ENCODE measurements at regions of chr2 and their contacts with region 1.

Region 1: DNA sequence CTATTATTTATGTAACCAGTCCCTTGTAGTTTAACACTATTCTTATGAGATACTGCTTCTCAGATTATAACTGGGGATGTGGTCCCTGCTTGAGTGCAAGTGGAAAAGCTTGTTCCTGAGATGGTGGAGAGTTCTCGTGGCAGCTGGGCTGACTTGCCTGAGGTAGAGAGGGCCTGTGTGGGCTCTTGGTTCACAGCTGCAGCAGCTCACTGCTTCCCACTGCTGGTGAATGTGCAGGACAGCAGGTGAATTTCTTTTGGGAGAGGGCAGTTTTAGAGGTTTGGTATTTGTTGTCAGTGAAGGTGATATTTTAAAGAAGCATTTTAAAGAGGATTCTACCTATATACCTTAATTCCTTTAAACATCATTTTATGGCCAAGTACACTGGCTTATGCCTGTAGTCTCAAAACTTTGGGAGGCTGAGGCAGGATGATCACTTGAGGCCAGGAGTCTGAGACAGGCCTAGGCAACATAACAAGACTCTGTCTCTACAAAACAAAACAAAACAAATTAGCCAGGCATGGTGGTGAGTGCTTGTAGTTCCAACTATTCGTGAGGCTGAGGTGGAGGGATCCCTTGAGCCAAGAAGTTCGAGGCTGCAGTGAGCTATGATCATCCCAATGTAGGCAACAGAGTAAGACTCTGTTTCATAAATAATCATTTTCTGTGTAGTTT is 94.8 kb downstream of the MTA3 start:
- DNase-seq: peak; percentile 26 to 85 (median 75)
- ATAC-seq: peak; percentile 96
- H3K4me3 ChIP-seq: no peak overlapping the region
- H3K4me3 Mint-ChIP-seq: peak overlapping the region in 7 of 10 donors; percentile 31 to 69 (median 53)
- H3K27ac ChIP-seq: peak overlapping the region; percentile 43
- H3K27ac Mint-ChIP-seq: peak overlapping the region in 8 of 9 donors; percentile 29 to 95 (median 83)
- H3K4me1 ChIP-seq: peaks cover 0 to 5% of the 10 kb centered on the region in 2 donors
- H3K4me1 Mint-ChIP-seq: peaks cover 8 to 60% (median 25%) of the 10 kb centered on the region in 7 donors
- H3K27me3 ChIP-seq: no peaks in the 10 kb centered on the region
- H3K27me3 Mint-ChIP-seq: no peaks in the 10 kb centered on the region

Region 2: GRCh38 chr2:41832218-41832617 is 831.0 kb before region 1 on chr2:
- CTCF ChIA-PET with region 1: no interaction called
- POLR2A ChIA-PET with region 1: no interaction called
- intact Hi-C with region 1: no loop called
- DNase-seq: no peak
- ATAC-seq: no peak
- H3K4me3 ChIP-seq: no peak overlapping the region
- H3K4me3 Mint-ChIP-seq: no peak overlapping the region
- H3K27ac ChIP-seq: no peak overlapping the region
- H3K27ac Mint-ChIP-seq: no peak overlapping the region
- H3K4me1 ChIP-seq: no peaks in the 10 kb centered on the region
- H3K4me1 Mint-ChIP-seq: no peaks in the 10 kb centered on the region
- H3K27me3 ChIP-seq: peaks cover 0 to 2% of the 10 kb centered on the region in 2 donors
- H3K27me3 Mint-ChIP-seq: peaks cover 28 to 63% (median 45%) of the 10 kb centered on the region in 5 donors

Region 3: GRCh38 chr2:42095923-42096408 is 567.3 kb before region 1 on chr2:
- CTCF ChIA-PET with region 1: no interaction called
- POLR2A ChIA-PET with region 1: no interaction called
- intact Hi-C with region 1: loop called (anchors 5 to 10 kb)
- DNase-seq: peak; percentile 46 to 78 (median 71)
- ATAC-seq: peak; percentile 71
- H3K4me3 ChIP-seq: no peak overlapping the region
- H3K4me3 Mint-ChIP-seq: no peak overlapping the region
- H3K27ac ChIP-seq: no peak overlapping the region
- H3K27ac Mint-ChIP-seq: peak overlapping the region in 7 of 9 donors; percentile 4 to 70 (median 25)
- H3K4me1 ChIP-seq: peaks cover 33 to 38% of the 10 kb centered on the region in 2 donors
- H3K4me1 Mint-ChIP-seq: peaks cover 37 to 50% (median 47%) of the 10 kb centered on the region in 7 donors
- H3K27me3 ChIP-seq: no peaks in the 10 kb centered on the region
- H3K27me3 Mint-ChIP-seq: peaks cover 0 to 35% (median 0%) of the 10 kb centered on the region in 5 donors

Region 4: GRCh38 chr2:42494355-42495233 is 168.6 kb before region 1 on chr2:
- CTCF ChIA-PET with region 1: interaction called, 21 read pairs
- POLR2A ChIA-PET with region 1: no interaction called
- intact Hi-C with region 1: loop called (anchors 1 kb)
- DNase-seq: peak; percentile 60 to 83 (median 77)
- ATAC-seq: peak; percentile 74
- H3K4me3 ChIP-seq: peak overlapping the region; percentile 60
- H3K4me3 Mint-ChIP-seq: peak overlapping the region; percentile 82 to 99 (median 96)
- H3K27ac ChIP-seq: peak overlapping the region; percentile 51
- H3K27ac Mint-ChIP-seq: peak overlapping the region; percentile 37 to 93 (median 83)
- H3K4me1 ChIP-seq: peaks cover 0 to 10% of the 10 kb centered on the region in 2 donors
- H3K4me1 Mint-ChIP-seq: peaks cover 0 to 18% (median 10%) of the 10 kb centered on the region in 7 donors
- H3K27me3 ChIP-seq: no peaks in the 10 kb centered on the region
- H3K27me3 Mint-ChIP-seq: peaks cover 0 to 49% (median 5%) of the 10 kb centered on the region in 5 donors

Region 5: DNA sequence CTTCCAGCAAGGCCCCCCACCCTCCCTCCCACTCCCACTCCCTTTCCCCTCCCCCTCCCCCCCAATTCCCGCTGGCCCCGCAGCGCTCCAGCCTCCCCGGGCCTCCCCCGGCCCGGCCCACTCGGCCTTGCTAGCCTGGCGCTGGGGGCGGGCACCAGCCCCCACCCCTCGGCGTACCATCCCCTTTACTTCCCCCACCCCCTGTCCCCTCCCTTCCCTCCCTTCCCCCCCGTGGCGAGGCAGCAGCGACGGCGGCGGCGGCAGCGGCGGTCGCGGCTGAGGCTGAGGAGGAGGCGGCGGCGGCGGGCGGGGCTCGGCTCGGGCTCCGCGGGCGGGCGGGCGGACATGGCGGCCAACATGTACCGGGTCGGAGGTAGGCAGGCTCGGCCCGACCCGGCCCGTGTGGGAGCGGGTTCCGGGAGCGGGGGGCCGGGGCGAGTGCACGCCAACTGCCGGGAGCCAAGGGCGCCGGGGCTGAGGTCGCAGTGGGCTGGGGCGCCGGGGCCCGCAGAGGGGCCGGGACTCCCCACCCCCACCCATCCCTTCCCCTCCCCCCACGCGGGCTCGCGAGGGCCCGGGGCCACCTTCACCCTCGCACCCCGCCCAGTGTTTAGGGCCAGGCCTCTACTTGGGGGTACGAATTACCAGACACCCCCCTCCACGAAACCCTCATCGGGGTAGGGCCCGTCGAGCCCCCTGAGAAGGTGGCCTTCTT is 94.7 kb before region 1 on chr2 and contains the start of gene MTA3:
- CTCF ChIA-PET with region 1: interaction called, 4 read pairs
- POLR2A ChIA-PET with region 1: interaction called, 6 read pairs
- intact Hi-C with region 1: loop called (anchors 1 to 2 kb)
- DNase-seq: peak; percentile 51 to 76 (median 67)
- ATAC-seq: peak; percentile 85
- H3K4me3 ChIP-seq: peak within 1 kb of the TSS; percentile 52
- H3K4me3 Mint-ChIP-seq: peak within 1 kb of the TSS; percentile 89 to 99 (median 94)
- H3K27ac ChIP-seq: peak within 1 kb of the TSS; percentile 74
- H3K27ac Mint-ChIP-seq: peak within 1 kb of the TSS; percentile 88 to 97 (median 94)
- H3K4me1 ChIP-seq: peaks cover 8 to 19% of the 10 kb centered on the region in 2 donors
- H3K4me1 Mint-ChIP-seq: peaks cover 11 to 50% (median 41%) of the 10 kb centered on the region in 7 donors
- H3K27me3 ChIP-seq: no peaks in the 10 kb centered on the region
- H3K27me3 Mint-ChIP-seq: no peaks in the 10 kb centered on the region
- total RNA-seq, gene MTA3: 23.9 to 49.1 (median 34.3) TPM

Region 6: DNA sequence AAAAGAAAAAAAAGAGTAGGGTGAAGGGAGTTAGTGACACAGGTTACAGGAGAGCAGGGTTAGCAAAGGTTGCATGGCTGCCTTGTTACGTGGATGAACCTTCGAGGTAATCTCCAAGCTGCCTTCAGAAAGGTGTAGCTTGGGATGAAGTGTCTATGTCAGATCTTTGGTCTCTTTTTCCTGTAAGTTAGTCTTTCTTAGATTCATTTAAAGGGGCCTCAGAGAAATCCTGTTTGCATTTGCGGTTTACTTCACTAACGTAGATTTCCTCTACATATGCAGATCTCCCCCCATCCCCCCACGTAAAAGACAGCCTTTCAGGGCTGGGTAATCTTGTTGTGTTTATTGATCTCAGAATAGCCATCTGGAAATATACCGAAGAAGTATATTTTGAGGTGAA is 11.2 kb before region 1 on chr2:
- CTCF ChIA-PET with region 1: interaction called, 15 read pairs
- POLR2A ChIA-PET with region 1: interaction called, 9 read pairs
- intact Hi-C with region 1: loop called (anchors 1 kb)
- DNase-seq: peak in 7 of 9 donors; percentile 71 to 85 (median 80)
- ATAC-seq: peak; percentile 83
- H3K4me3 ChIP-seq: peak overlapping the region; percentile 41
- H3K4me3 Mint-ChIP-seq: peak overlapping the region; percentile 70 to 86 (median 76)
- H3K27ac ChIP-seq: peak overlapping the region; percentile 71
- H3K27ac Mint-ChIP-seq: peak overlapping the region; percentile 78 to 99 (median 96)
- H3K4me1 ChIP-seq: peaks cover 0 to 69% of the 10 kb centered on the region in 2 donors
- H3K4me1 Mint-ChIP-seq: peaks cover 24 to 96% (median 68%) of the 10 kb centered on the region in 7 donors
- H3K27me3 ChIP-seq: no peaks in the 10 kb centered on the region
- H3K27me3 Mint-ChIP-seq: no peaks in the 10 kb centered on the region

Measured in naive thymus-derived CD4-positive, alpha-beta T cell (primary cell).